Right ventricle myocardium inferior (tissue), 1 donor: ENCODE measurements at regions of chr15 and their contacts with region 1.

Region 1: GRCh38 chr15:83011271-83012075 is at the start of gene C15orf40:
- DNase-seq: peak; percentile 97
- ATAC-seq: peak; percentile 99
- total RNA-seq, gene C15orf40: 11.1 TPM

Region 2: GRCh38 chr15:83066734-83067637 is 55.5 kb after region 1 on chr15 and contains the start of gene BTBD1:
- intact Hi-C with region 1: loop called (anchors 5 kb)
- DNase-seq: peak; percentile 97
- ATAC-seq: peak; percentile 99
- total RNA-seq, gene BTBD1: 150 TPM

Region 3: DNA sequence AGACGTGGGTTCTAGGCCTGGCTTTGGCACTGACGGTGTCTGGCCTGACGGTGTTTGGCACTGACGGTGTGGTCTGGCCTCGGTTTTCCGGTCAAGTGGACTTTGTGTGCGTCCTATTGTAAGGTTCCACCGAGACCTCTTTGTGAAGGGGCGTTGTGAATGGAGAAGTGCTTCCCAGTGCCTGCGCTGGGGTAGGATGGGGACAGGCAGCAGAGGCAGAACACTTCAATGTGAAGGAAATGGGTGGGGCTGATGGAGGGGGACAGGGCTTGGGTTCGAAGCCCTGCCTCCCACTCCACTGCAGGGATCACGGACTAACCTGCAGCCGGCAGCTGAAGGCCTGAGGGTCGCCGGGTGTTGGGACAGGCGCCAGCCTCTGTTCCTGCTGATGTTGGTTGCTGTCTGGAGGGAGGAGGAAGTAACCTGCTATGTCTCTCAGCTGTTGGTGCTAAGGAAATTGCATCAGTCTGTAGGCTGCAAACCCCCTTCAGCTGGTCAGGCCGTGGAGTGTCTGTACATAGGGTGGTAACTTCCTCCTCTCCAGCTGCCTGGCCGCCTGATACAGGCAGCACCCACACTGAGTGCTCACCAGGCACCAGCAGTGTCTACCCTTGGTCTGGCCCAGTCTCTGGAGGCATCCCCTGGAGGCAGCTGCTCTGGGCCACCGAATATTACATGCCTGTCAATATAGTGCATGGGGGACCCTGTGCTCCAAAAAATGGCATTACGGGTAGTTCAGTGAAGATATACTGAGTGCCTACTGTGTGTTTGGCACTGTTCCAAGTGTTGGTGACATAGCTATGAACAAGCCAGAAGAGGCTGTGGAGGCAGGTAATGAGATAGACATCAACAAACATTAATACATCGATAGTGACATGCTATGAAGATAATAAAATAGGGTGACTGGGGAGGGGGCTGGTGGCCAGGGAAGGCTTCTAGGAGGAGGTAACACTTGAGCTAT is 97.1 kb after region 1 on chr15:
- intact Hi-C with region 1: loop called (anchors 5 kb)
- DNase-seq: peak; percentile 86
- ATAC-seq: peak; percentile 85

Region 4: DNA sequence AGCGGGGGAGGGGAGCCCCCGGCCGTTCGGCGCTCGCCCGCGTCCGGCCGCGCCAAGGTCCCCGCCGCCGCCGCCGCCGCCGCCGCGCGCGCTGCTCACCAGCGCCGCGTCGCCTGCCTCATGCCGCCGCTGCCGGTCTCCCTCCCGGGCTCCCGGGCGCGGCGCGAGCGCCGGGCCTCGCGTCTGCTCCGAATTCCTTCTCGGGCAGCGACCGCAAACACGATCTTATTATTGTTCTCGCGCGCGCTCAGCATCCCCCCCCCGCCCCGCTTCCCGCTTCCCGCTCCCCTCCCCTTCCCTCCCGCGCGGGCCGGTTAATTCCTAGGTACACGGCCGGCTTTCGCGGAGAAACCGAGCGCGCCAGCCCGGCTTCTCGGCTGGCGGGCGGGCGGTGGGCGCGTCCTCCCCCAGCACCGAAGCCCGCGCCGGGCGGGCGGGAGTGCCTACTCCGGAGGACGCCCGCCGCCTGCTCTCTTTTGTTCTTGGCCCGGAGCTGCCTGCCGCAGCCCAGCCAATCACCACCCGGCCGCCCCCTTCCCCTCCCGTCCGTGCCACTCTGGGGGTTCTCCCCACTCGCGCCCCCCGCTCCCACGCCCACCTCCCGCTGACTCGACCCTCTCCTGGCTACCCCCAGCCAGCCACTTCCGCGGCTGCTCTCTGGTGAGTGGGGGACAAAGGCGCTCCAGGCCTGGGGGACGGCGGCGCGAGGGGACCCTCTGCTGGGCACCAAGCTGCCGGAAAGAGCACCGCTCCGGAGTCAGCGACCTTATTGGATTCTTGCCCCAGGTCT is 196.3 kb after region 1 on chr15 and contains the start of gene HDGFL3:
- intact Hi-C with region 1: loop called (anchors 1 kb)
- DNase-seq: peak; percentile 85
- ATAC-seq: peak; percentile 50
- total RNA-seq, gene HDGFL3: 32.8 TPM